T-cell (primary cell): ENCODE measurements at regions of chr19 and their contacts with region 1.

Region 1: GRCh38 chr19:15354566-15355296 is 22.4 kb upstream of the BRD4 start:
- DNase-seq: no peak
- ATAC-seq: no peak
- H3K4me3 ChIP-seq: no peak overlapping the region
- H3K4me3 Mint-ChIP-seq: no peak overlapping the region
- H3K27ac ChIP-seq: no peak overlapping the region
- H3K27ac Mint-ChIP-seq: no peak overlapping the region
- H3K4me1 ChIP-seq: no peaks in the 10 kb centered on the region
- H3K4me1 Mint-ChIP-seq: no peaks in the 10 kb centered on the region
- H3K27me3 ChIP-seq: no peaks in the 10 kb centered on the region
- H3K27me3 Mint-ChIP-seq: no peaks in the 10 kb centered on the region

Region 2: DNA sequence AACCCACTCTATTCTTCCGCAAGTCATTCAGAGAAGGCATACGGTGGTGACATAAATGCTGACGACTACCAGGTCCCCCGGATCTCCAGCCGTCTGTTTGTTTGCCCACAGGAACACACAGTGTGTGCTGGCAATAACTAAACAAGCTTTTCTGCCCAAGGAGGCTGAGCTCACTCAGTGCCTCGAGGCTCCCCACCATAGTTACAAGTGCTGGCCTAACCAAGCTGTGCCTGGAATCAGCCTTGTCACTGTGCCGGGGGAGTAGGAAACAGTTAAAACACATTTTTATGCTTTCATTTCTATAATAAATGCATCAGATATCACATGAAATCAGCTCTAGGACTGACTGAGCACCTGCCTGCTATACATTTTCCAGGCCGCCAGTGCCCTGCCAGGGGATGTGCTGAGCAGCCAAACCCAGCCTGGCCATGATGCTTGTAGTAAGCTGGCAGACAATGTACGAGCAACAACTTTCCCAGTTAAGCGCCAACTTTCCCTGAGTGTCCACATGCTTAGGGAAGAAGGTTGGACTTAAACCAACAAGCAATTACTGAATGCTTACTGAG is 50.5 kb before region 1 on chr19:
- CTCF ChIA-PET with region 1: no interaction called
- POLR2A ChIA-PET with region 1: no interaction called
- DNase-seq: peak in 2 of 35 experiments; percentile 22 to 32
- ATAC-seq: peak in 1 of 4 experiments; percentile 25
- H3K4me3 ChIP-seq: no peak overlapping the region
- H3K4me3 Mint-ChIP-seq: peak overlapping the region; percentile 50 to 60 (median 54)
- H3K27ac ChIP-seq: no peak overlapping the region
- H3K27ac Mint-ChIP-seq: peak overlapping the region; percentile 53 to 62
- H3K4me1 ChIP-seq: peaks cover 22 to 68% of the 10 kb centered on the region in 2 experiments
- H3K4me1 Mint-ChIP-seq: peaks cover 81 to 90% (median 86%) of the 10 kb centered on the region in 3 donors
- H3K27me3 ChIP-seq: no peaks in the 10 kb centered on the region
- H3K27me3 Mint-ChIP-seq: no peaks in the 10 kb centered on the region

Region 3: DNA sequence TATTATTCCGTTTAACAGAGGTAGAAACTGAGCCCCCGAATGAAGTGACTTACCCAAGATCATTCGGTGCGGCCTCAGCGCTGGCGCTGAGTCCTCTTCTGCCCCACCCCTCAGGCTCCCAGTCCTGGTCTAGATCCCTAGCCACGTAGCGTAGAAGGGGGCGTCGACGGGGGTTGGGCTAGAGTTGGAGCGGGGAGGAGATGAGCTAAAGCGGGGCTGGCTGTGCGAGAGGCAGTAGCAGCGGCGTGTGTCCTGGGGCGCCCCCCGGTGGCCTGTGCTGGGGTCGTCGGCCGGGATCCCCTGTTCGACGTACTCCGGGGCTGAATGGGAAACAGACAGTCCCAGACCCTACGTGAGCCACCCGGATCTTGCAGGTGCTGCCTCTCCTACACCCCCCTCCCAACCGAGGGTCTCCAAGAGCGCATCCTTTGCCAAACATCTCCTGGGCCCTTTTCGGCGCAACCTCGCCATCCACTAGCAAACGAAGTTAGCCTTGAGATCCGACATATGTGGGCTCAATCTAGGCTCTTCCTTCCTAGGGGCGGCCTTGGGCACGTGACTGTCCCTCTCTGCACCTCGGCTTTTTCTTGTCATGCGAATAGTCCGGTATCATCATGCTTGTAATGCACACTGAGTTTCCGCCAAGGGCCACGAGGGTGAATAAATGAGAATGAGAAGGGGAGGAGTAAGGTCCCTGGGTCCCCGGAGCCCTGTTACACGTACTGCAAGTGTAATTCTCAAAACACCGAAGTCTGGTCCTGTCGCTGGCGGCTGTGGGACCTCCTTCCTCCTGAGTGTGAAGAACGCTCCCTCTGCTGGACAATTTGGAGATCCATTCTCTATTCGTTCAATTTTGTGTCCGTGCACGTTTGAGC is 201.3 kb after region 1 on chr19:
- CTCF ChIA-PET with region 1: interaction called in 1 of 2 experiments, 13 read pairs
- POLR2A ChIA-PET with region 1: no interaction called
- DNase-seq: peak; percentile 87 to 99 (median 94)
- ATAC-seq: peak; percentile 81 to 89 (median 86)
- H3K4me3 ChIP-seq: peak overlapping the region; percentile 52 to 82
- H3K4me3 Mint-ChIP-seq: peak overlapping the region; percentile 66 to 81 (median 75)
- H3K27ac ChIP-seq: peak overlapping the region; percentile 65
- H3K27ac Mint-ChIP-seq: peak overlapping the region; percentile 88 to 89
- H3K4me1 ChIP-seq: peaks cover 7 to 33% of the 10 kb centered on the region in 2 experiments
- H3K4me1 Mint-ChIP-seq: peaks cover 23 to 30% (median 28%) of the 10 kb centered on the region in 3 donors
- H3K27me3 ChIP-seq: peaks cover 0 to 14% of the 10 kb centered on the region in 2 experiments
- H3K27me3 Mint-ChIP-seq: no peaks in the 10 kb centered on the region